ENCODE measurements at regions of chr17 and their contacts with region 1.

Region 1: DNA sequence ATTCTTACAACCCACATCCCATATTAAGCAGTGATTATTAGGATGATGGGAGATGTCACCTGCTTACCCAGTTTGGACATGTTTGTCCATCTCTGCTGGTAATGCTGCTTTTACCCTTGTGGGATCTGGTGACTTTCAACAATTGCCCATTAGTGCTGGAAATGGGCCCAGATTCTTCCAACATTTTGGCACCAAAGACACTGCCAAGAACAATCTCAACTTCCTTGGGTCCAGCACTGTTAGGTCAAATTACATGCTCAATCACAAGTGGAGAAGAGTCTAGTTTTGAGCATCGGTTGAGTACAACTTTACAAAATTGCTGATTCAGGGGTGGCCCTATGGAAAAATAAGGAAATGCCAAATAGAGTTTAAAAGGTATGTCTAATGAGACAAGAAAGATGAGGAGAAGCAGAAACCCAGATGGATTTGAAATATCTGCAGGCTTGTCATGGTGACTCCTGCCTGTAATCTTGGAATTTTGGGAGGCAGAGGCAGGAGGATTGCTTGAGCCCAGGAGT is 13.0 kb upstream of the ZFP3 start:
- DNase-seq: no peak
- H3K4me3 ChIP-seq: no peak overlapping the region
- H3K27ac ChIP-seq: no peak overlapping the region
- H3K4me1 ChIP-seq: no peaks in the 10 kb centered on the region
- H3K27me3 ChIP-seq: no peaks in the 10 kb centered on the region
- CTCF ChIP-seq: no peak
- POLR2A ChIP-seq: no peak

Region 2: GRCh38 chr17:4903051-4903818 is 162.1 kb before region 1 on chr17 and contains the start of gene CHRNE:
- intact Hi-C with region 1: loop called (anchors 10 kb)
- DNase-seq: no peak
- H3K4me3 ChIP-seq: no peak within 1 kb of the TSS
- H3K27ac ChIP-seq: peak within 1 kb of the TSS; percentile 42
- H3K4me1 ChIP-seq: peaks cover 32% of the 10 kb centered on the region
- H3K27me3 ChIP-seq: no peaks in the 10 kb centered on the region
- CTCF ChIP-seq: peak in 2 of 3 experiments; percentile 27 to 69
- POLR2A ChIP-seq: no peak
- total RNA-seq, gene CHRNE: 0.98 TPM

Measured in vagina (tissue), 2 donors.